IMR-90 (cell line): ENCODE measurements at regions of chr22 and their contacts with region 1.

Region 1: GRCh38 chr22:20606041-20606783 is 98.8 kb downstream of the MED15 start:
- DNase-seq: peak; percentile 59
- ATAC-seq: peak; percentile 88
- H3K4me3 ChIP-seq: no peak overlapping the region
- H3K27ac ChIP-seq: no peak overlapping the region
- H3K4me1 ChIP-seq: no peaks in the 10 kb centered on the region
- H3K27me3 ChIP-seq: peaks cover 47% of the 10 kb centered on the region
- CTCF ChIP-seq: peak; percentile 72
- POLR2A ChIP-seq: no peak
- RAD21 ChIP-seq: peak; percentile 76

Region 2: GRCh38 chr22:20674998-20675397 is 68.8 kb after region 1 on chr22:
- CTCF ChIA-PET with region 1: no interaction called
- POLR2A ChIA-PET with region 1: no interaction called
- dilution Hi-C with region 1: no loop called
- in situ Hi-C with region 1: loop called (anchors 10 kb)
- intact Hi-C with region 1: no loop called
- DNase-seq: no peak
- ATAC-seq: no peak; the same call in 1 of the 2 replicates
- H3K4me3 ChIP-seq: no peak overlapping the region
- H3K27ac ChIP-seq: no peak overlapping the region
- H3K4me1 ChIP-seq: no peaks in the 10 kb centered on the region
- H3K27me3 ChIP-seq: peaks cover 16% of the 10 kb centered on the region
- CTCF ChIP-seq: no peak
- POLR2A ChIP-seq: no peak
- RAD21 ChIP-seq: no peak